ENCODE measurements at regions of chr15 and their contacts with region 1.

Region 1: GRCh38 chr15:94324117-94324826 is 92.9 kb downstream of the MCTP2 start:
- DNase-seq: peak in 8 of 9 experiments; percentile 37 to 84 (median 60)
- ATAC-seq: peak; percentile 83
- H3K4me3 ChIP-seq: no peak overlapping the region
- H3K4me3 Mint-ChIP-seq: peak overlapping the region; percentile 32
- H3K27ac ChIP-seq: no peak overlapping the region
- H3K27ac Mint-ChIP-seq: peak overlapping the region; percentile 25
- H3K4me1 ChIP-seq: no peaks in the 10 kb centered on the region
- H3K4me1 Mint-ChIP-seq: peaks cover 15% of the 10 kb centered on the region
- H3K27me3 ChIP-seq: no peaks in the 10 kb centered on the region
- H3K27me3 Mint-ChIP-seq: no peaks in the 10 kb centered on the region
- CTCF ChIP-seq: peak; percentile 90

Region 2: GRCh38 chr15:93030430-93031105 is 1293.7 kb before region 1 on chr15:
- CTCF ChIA-PET with region 1: interaction called, 4 read pairs
- POLR2A ChIA-PET with region 1: no interaction called
- intact Hi-C with region 1: loop called in 1 of 2 experiments (anchors 5 kb)
- DNase-seq: peak; percentile 40 to 80 (median 67)
- ATAC-seq: peak; percentile 85
- H3K4me3 ChIP-seq: no peak overlapping the region
- H3K4me3 Mint-ChIP-seq: no peak overlapping the region
- H3K27ac ChIP-seq: no peak overlapping the region
- H3K27ac Mint-ChIP-seq: no peak overlapping the region
- H3K4me1 ChIP-seq: peaks cover 14% of the 10 kb centered on the region
- H3K4me1 Mint-ChIP-seq: peaks cover 26% of the 10 kb centered on the region
- H3K27me3 ChIP-seq: no peaks in the 10 kb centered on the region
- H3K27me3 Mint-ChIP-seq: no peaks in the 10 kb centered on the region
- CTCF ChIP-seq: peak; percentile 82

Region 3: GRCh38 chr15:94163999-94164807 is 160.1 kb before region 1 on chr15:
- CTCF ChIA-PET with region 1: interaction called, 322 read pairs
- POLR2A ChIA-PET with region 1: interaction called, 8 read pairs
- intact Hi-C with region 1: loop called (anchors 1 kb)
- DNase-seq: peak; percentile 19 to 71 (median 54)
- ATAC-seq: no peak
- H3K4me3 ChIP-seq: no peak overlapping the region
- H3K4me3 Mint-ChIP-seq: no peak overlapping the region
- H3K27ac ChIP-seq: no peak overlapping the region
- H3K27ac Mint-ChIP-seq: no peak overlapping the region
- H3K4me1 ChIP-seq: no peaks in the 10 kb centered on the region
- H3K4me1 Mint-ChIP-seq: no peaks in the 10 kb centered on the region
- H3K27me3 ChIP-seq: no peaks in the 10 kb centered on the region
- H3K27me3 Mint-ChIP-seq: no peaks in the 10 kb centered on the region
- CTCF ChIP-seq: peak; percentile 89

Region 4: GRCh38 chr15:94306700-94307650 is 17.3 kb before region 1 on chr15:
- CTCF ChIA-PET with region 1: interaction called, 23 read pairs
- POLR2A ChIA-PET with region 1: no interaction called
- intact Hi-C with region 1: no loop called
- DNase-seq: peak in 4 of 9 experiments; percentile 11 to 85 (median 60)
- ATAC-seq: peak; percentile 74
- H3K4me3 ChIP-seq: no peak overlapping the region
- H3K4me3 Mint-ChIP-seq: peak overlapping the region; percentile 36
- H3K27ac ChIP-seq: peak overlapping the region in 1 of 2 experiments; percentile 69
- H3K27ac Mint-ChIP-seq: peak overlapping the region; percentile 82
- H3K4me1 ChIP-seq: peaks cover 24% of the 10 kb centered on the region
- H3K4me1 Mint-ChIP-seq: peaks cover 39% of the 10 kb centered on the region
- H3K27me3 ChIP-seq: no peaks in the 10 kb centered on the region
- H3K27me3 Mint-ChIP-seq: no peaks in the 10 kb centered on the region
- CTCF ChIP-seq: no peak

Region 5: GRCh38 chr15:94346282-94346681 is 22.0 kb after region 1 on chr15:
- CTCF ChIA-PET with region 1: interaction called, 12 read pairs
- POLR2A ChIA-PET with region 1: interaction called, 5 read pairs
- intact Hi-C with region 1: no loop called
- DNase-seq: no peak
- ATAC-seq: no peak
- H3K4me3 ChIP-seq: no peak overlapping the region
- H3K4me3 Mint-ChIP-seq: no peak overlapping the region
- H3K27ac ChIP-seq: no peak overlapping the region
- H3K27ac Mint-ChIP-seq: no peak overlapping the region
- H3K4me1 ChIP-seq: no peaks in the 10 kb centered on the region
- H3K4me1 Mint-ChIP-seq: peaks cover 2% of the 10 kb centered on the region
- H3K27me3 ChIP-seq: no peaks in the 10 kb centered on the region
- H3K27me3 Mint-ChIP-seq: no peaks in the 10 kb centered on the region
- CTCF ChIP-seq: no peak

Measured in CD8-positive, alpha-beta T cell (primary cell).